HAP-1 (cell line): ENCODE measurements at regions of chr17 and their contacts with region 1.

Region 1: DNA sequence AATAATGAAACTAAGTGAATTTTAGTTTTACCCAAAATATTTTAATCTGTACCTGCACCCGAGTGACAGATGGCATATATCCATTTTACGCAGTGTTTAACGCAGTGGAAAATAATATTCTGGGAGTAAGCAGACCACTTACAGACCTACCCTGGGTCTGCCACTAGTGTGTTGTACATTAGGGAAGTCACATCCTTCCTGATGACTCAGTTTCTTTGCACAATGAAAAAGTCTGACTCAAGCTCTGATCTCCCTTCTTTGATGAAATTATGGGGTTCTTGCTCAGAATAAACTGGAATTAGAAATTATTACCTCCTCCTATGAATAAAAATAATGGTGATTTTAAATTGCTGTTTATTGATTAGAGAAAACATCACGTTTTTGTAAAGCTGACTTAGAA is 123.2 kb upstream of the AXIN2 start:
- DNase-seq: no peak
- H3K4me3 ChIP-seq: no peak overlapping the region
- H3K4me1 ChIP-seq: no peaks in the 10 kb centered on the region
- H3K27me3 ChIP-seq: no peaks in the 10 kb centered on the region

Region 2: DNA sequence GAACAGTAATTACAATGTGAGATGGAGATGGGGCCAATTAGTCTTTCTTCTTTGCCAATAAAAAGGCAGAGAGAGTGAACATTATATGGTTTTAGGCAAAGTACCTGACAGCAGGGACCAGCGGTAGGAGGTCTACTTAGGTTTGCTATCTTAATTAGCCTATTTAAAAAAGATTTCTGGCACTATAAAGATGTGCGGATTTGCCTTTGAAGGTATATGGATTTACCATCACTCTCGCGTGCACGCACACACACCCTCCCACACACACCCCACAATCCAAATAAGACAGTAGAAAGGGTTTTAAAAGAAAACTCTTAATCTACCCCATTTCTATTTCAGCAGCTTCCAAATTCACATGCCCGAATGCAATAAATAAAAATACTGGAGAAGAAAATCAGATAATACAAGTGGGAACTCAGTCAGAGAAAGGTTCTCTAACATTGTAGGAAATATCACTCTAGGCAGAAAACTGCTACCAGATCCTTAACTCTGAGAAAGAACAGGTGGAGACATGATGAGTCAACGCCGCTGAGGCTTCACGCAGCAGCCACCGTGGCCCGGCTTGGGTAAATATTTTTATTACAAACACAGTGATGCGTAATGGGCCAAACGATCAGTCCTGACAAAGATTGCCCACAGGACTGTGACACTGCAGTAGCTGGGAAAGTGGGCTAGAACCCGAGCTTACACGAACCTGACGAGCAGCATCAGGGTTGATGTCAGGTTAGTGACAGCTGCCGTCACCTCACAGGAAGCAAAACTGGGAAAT is 56.6 kb before region 1 on chr17:
- in situ Hi-C with region 1: loop called (anchors 10 kb)
- DNase-seq: no peak
- H3K4me3 ChIP-seq: no peak overlapping the region
- H3K4me1 ChIP-seq: no peaks in the 10 kb centered on the region
- H3K27me3 ChIP-seq: no peaks in the 10 kb centered on the region